Activated CD8-positive, alpha-beta memory T cell treated with anti-CD3 and anti-CD28 coated beads, Interleukin-2, amount 10 ng/mL, durations not matched to agents 7 days and 5 days (primary cell): ENCODE measurements at regions of chr7 and their contacts with region 1.

Region 1: GRCh38 chr7:33932832-33933468 is 27.6 kb downstream of the BMPER start:
- DNase-seq: peak; percentile 67
- ATAC-seq: peak; percentile 42
- H3K4me3 Mint-ChIP-seq: no peak overlapping the region
- H3K27ac Mint-ChIP-seq: no peak overlapping the region
- H3K4me1 Mint-ChIP-seq: no peaks in the 10 kb centered on the region
- H3K27me3 Mint-ChIP-seq: peaks cover 26% of the 10 kb centered on the region

Region 2: DNA sequence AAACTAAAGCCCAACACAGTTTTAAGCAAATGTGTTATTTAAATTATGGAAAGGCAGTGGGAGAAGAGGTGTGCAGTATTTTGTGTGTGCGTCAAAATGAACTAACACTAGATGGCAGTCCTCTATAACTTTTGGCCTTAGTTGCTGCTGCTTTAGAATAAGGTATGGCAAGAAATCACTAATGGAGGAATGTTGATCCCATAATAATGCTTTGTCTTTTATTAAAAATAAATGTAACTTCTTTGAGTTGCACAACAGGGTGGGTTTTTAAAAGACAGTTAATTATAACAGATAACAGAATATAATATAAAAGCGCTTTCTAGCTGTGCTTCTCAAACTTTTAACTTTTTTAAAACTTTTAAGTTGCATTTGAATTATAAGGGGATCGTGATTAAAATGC is 747.2 kb before region 1 on chr7:
- CTCF ChIA-PET with region 1: interaction called, 18 read pairs
- DNase-seq: no peak
- ATAC-seq: no peak
- H3K4me3 Mint-ChIP-seq: no peak overlapping the region
- H3K27ac Mint-ChIP-seq: no peak overlapping the region
- H3K4me1 Mint-ChIP-seq: peaks cover 3% of the 10 kb centered on the region
- H3K27me3 Mint-ChIP-seq: no peaks in the 10 kb centered on the region

Region 3: GRCh38 chr7:33904681-33905388 is 28.1 kb before region 1 on chr7:
- CTCF ChIA-PET with region 1: interaction called, 10 read pairs
- DNase-seq: no peak
- ATAC-seq: peak; percentile 69
- H3K4me3 Mint-ChIP-seq: peak overlapping the region; percentile 57
- H3K27ac Mint-ChIP-seq: no peak overlapping the region
- H3K4me1 Mint-ChIP-seq: peaks cover 6% of the 10 kb centered on the region
- H3K27me3 Mint-ChIP-seq: peaks cover 78% of the 10 kb centered on the region

Region 4: DNA sequence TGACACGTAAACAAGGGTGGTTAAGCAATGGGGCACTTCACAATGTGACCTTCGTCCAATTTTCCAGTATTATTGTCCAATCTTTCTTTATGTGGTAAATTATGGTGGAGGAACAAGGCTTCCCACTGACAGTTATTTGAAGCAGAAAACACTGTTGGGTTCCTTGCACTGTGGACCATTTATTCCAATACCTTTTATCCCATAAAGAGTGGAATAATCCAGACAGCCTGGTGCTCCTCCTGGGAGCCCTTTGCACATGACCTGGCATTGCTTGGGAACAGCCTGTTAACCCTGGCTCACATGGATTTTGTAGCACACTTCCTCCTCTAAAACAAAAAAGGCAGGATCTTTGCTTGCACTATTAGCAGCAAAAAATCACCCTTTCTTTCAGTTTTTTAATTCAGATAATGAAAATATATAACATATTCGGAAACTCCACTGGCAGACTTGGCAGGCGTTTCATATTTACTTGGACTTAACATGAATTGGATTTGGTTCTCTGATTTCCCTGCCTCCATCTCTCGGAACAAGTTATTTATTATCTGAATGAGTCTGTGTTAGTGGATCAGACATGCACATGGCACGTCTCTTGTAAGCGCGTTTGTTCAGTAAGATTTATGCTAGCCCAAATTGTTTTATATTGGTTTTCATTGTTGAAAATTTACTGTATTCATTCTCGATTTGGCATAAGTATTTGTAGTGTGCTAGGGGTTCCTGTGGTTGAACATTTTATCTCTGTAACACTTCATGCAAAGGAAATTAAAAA is 31.6 kb after region 1 on chr7:
- CTCF ChIA-PET with region 1: no interaction called
- DNase-seq: no peak
- ATAC-seq: no peak
- H3K4me3 Mint-ChIP-seq: no peak overlapping the region
- H3K27ac Mint-ChIP-seq: no peak overlapping the region
- H3K4me1 Mint-ChIP-seq: no peaks in the 10 kb centered on the region
- H3K27me3 Mint-ChIP-seq: peaks cover 4% of the 10 kb centered on the region

Region 5: DNA sequence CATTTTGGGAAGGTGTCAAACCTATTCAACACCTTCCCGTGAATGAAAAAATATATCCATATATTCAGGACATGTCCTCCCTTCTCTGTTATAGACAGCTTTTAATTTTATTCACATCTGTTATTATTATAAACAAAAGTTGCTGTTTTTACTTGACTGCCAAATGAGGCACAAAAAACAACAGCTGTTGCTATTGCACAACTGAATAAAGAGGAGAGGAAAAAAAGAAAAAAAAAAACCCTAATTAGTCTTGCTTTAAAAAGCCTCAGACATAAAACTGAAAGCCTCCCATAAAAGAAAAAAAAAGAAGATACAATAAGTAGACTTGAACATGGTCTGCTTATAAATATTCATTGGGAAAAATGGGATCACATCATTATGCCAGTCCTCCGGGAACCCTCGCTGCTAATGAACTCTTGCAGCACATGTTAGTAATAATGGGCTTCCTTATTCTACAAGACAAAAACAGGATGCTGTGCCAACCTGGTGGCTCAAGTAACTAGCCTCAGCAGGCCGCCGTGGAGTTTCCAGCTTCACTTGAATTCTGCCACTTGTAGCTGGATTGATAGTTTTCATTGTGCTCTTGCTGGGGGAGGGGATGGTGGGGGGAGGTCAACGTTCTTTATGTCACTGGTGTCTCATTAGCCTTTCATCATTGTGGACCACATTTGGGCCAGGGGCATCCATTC is 126.0 kb after region 1 on chr7:
- CTCF ChIA-PET with region 1: no interaction called
- DNase-seq: no peak
- ATAC-seq: no peak
- H3K4me3 Mint-ChIP-seq: no peak overlapping the region
- H3K27ac Mint-ChIP-seq: no peak overlapping the region
- H3K4me1 Mint-ChIP-seq: no peaks in the 10 kb centered on the region
- H3K27me3 Mint-ChIP-seq: no peaks in the 10 kb centered on the region